SK-N-SH (cell line): ENCODE measurements at regions of chr17 and their contacts with region 1.

Region 1: DNA sequence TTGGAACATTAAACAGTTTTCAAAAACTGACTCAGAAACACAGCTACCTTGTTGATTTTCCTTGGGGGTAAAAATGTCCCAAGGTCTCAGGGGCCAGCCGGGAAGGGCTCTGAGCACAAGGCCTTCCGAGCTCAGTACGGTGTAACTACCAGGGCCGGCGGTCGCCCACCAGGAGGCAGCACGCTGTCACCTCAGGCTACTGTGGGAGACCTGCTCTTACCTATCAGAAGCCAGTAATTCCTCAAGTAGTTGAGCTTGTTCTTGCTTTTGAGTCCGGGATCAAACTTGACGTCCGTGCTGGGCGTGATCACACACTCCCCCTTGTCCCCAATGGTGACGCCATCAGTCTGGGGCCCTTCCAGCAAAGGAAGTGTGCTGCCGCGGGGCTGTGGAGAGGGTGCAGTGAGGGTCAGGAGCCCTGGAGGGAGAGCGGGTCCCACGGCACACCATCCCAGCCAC is 43.4 kb upstream of the ICAM2 start:
- DNase-seq: peak; percentile 72
- H3K4me3 ChIP-seq: no peak overlapping the region
- H3K27ac ChIP-seq: no peak overlapping the region
- H3K4me1 ChIP-seq: no peaks in the 10 kb centered on the region
- H3K27me3 ChIP-seq: no peaks in the 10 kb centered on the region
- CTCF ChIP-seq: peak; percentile 49
- EP300 ChIP-seq: no peak
- RAD21 ChIP-seq: peak; percentile 66

Region 2: DNA sequence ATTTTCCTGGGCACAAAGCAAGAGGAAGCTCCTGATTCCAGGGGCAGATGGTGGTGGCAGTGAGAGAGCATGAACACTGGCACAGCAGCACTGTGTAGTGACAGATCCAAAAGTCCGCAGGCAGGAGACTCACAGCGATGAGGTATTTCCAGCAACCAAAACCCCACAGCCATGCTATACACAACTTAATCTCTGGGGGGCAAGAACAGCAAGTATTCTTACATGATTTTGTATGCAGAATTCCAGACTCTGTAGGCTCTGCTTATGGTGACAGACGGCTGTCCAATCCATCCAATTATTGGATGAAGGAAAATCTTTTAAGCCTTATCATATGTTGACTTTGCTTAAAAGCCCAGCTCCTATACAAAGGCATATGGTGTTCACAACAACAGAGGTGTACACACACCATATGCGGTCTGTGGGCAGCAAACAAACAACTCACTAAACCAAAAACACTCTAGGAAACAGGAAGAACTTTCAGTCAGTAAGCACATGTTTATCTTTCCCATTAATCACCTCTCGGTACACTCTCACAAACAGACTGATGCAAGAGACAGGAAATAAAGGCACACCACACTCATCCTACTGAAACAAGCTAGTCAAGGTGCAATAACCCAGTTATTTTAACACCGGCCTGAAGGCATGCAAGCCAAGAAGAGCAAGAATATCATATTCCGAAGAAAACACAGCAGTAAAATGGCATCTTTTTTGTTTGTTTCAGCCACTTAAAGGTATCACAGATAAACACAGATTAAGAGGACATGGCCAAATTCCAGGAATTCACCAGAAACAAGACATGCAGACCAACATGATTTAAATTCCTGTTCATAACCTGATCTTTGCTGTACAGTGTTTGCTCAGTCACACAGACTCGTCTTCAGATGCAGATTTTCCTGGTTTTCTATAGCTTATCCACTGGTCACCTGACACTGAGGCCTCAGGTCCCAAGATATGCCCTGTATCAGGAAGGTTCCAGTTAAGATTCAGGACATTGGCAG is 18.3 kb after region 1 on chr17:
- CTCF ChIA-PET with region 1: interaction called, 34 read pairs
- POLR2A ChIA-PET with region 1: no interaction called
- DNase-seq: peak; percentile 76
- H3K4me3 ChIP-seq: no peak overlapping the region
- H3K27ac ChIP-seq: peak overlapping the region; percentile 14 to 87; a peak in 3 of 4 replicates
- H3K4me1 ChIP-seq: peaks cover 12 to 26% of the 10 kb centered on the region in 2 experiments
- H3K27me3 ChIP-seq: no peaks in the 10 kb centered on the region
- CTCF ChIP-seq: peak; percentile 15; the same call in 1 of the 2 replicates
- EP300 ChIP-seq: no peak
- RAD21 ChIP-seq: peak; percentile 46

Region 3: DNA sequence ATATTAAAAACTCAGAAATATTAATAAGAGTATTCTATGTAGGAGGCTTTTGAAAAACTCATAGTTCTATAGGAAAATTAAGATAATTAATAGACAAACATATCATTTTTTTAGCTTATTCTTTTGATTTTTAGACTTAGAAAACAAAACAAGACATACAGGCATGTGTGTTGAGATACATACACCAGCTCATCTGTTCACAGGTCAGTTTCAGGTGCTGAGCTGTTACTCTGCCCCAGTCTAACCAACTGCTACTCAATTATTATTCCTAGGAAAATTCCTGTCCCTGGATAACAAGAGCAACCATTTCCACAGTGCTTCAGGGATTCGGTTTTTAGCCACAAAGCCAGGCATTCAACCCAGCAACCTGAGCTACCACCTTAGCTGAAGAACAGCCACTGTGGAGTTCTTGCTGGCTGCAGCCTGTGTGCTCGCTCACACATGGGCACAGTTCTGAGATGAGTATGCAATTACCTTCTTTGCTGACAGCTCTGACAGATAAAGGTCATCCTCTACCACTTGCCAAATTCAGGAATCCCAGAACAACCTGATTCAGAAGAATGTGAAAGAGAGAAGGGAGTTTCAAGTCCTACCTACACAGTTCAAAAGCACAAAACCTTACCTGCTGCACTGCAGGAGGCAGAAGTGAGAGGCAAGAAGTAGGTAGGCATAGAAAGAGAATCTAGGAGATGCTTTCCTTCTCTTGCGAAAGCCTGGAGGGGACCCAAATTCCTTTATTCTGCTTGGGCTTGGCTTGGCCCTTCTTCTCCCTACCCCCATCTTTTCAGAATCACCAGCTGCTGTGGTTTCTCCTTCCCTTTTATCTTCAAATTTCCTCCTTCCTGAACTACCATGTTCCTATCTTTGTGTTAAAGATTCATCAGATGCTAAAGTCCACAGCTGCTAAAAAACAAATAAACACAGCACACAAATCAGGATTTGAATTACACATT is 136.6 kb after region 1 on chr17:
- CTCF ChIA-PET with region 1: no interaction called
- POLR2A ChIA-PET with region 1: no interaction called
- DNase-seq: no peak
- H3K4me3 ChIP-seq: no peak overlapping the region
- H3K27ac ChIP-seq: peak overlapping the region in 1 of 2 experiments; percentile 26; a peak in 2 of 4 replicates
- H3K4me1 ChIP-seq: peaks cover 32 to 41% of the 10 kb centered on the region in 2 experiments
- H3K27me3 ChIP-seq: no peaks in the 10 kb centered on the region
- CTCF ChIP-seq: no peak
- EP300 ChIP-seq: no peak
- RAD21 ChIP-seq: no peak